Activated naive CD4-positive, alpha-beta T cell treated with anti-CD3 and anti-CD28 coated beads for 36 hours (primary cell): ENCODE measurements at regions of chr17 and their contacts with region 1.

Region 1: DNA sequence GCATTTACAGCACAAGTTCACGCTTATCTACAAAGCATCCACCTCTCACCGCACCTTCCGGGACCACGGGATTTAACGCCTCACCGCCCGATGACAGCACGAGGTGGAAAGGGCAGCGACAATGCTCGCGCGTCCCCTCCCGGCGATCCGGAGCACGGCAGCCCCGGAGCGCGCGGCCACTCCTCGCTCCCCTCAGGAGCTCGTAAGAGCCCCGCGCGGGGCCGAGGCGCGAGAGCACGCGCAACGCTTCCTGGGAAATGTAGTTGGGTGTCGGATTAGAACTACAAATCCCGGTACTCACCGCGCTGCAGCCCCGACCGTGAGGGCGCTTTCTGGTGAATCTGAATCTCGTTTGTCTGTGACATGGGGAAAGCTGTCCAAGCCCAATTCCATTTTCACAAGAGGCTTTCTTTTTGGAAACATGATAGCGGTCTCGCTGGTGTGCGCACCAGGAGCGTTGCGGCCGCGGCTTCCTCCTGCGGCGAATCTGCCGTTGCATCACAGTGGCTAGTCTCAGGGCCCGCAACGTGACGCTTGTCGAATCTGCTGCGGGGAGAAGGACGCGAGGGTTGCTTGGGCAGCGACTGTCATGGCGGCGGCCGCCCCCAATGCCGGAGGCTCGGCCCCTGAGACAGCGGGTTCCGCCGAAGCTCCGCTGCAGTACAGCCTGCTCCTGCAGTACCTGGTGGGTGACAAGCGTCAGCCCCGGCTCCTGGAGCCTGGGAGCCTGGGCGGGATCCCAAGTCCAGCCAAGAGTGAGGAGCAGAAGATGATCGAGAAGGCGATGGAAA is at the start of gene TIMM22:
- DNase-seq: peak; percentile 95
- H3K4me3 Mint-ChIP-seq: peak within 1 kb of the TSS; percentile 90
- H3K27ac Mint-ChIP-seq: peak within 1 kb of the TSS; percentile 96
- H3K4me1 Mint-ChIP-seq: peaks cover 26% of the 10 kb centered on the region
- H3K27me3 Mint-ChIP-seq: no peaks in the 10 kb centered on the region
- total RNA-seq, gene TIMM22: 7.3 to 7.4 TPM

Region 2: DNA sequence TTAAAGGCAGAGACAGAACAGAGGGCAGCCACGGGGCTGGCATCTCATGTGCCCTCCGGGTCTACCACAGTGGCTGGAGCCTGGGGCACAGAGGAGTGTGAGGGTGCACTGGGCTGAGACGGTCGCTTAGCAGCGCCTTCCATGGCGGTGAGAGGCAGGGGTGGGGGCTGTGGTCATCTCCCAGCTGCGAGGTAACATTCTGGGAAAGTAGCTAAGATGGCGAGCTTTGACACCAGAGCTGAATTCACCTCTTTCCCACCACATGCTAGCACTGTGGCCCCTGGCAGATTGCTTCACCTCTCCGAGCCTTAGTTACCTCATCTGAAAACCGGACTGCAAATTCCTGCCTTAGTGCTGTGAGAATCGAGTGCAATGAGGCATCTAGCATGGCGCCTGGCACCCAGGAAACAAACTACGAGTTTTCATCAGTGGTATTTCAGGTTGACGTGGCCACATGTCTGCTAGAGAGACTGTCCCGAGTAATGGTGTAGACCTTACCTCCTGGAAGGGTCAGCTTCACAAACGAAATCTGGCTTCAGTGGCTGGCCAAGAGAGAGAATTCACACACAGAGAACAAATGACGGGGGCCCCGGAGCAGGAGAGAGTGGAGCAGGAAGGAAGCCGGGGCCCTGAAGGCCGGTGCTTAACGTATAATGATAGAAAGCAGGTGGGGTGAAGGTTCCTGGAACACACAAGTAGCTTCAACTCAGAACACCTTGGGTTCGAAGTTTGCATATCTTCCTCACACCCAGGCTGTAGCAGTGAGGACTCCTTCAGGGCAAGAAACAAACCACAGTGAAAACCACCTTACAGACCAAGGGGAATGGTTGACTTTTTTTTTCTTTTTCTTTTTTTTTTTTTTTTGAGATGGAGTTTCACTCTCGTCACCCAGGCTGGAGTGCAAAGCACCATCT is 580.2 kb before region 1 on chr17:
- CTCF ChIA-PET with region 1: no interaction called
- intact Hi-C with region 1: loop called (anchors 1 kb)
- DNase-seq: peak; percentile 78
- H3K4me3 Mint-ChIP-seq: peak overlapping the region; percentile 91
- H3K27ac Mint-ChIP-seq: peak overlapping the region; percentile 100
- H3K4me1 Mint-ChIP-seq: peaks cover 77% of the 10 kb centered on the region
- H3K27me3 Mint-ChIP-seq: no peaks in the 10 kb centered on the region

Region 3: DNA sequence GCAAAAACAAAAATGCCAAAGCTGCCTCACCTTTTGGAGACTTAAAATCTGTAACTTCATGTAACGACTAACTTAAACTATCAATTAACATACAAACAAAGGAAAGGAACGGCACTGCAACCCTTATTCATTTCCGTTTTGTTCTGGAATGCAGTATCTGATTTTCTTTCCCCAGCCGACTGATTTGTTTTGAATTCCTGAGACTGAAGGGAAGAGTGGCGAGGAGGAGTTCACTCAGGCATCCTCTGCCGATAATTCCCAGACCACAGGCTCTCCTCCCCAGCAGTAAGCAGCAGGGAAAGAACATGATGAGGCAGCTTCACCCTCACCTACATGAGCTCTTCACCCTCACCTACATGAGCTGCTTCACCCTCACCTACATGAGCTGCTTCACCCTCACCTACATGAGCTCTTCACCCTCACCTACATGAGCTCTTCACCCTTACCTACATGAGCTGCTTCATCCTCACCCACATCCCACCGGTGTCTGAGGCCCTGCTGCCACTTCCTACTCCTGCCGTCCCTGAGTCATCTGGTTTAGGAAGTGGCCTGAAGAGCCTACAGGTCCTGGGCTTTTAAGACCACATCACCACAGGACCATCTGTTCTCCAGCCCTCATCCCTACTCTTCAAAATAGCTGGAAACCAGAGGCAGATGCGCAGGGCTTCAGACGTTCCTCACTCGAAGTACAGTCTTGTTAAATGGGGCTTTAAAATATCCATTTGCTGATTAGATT is 476.1 kb before region 1 on chr17:
- CTCF ChIA-PET with region 1: no interaction called
- intact Hi-C with region 1: no loop called
- DNase-seq: no peak
- H3K4me3 Mint-ChIP-seq: no peak overlapping the region
- H3K27ac Mint-ChIP-seq: no peak overlapping the region
- H3K4me1 Mint-ChIP-seq: no peaks in the 10 kb centered on the region
- H3K27me3 Mint-ChIP-seq: no peaks in the 10 kb centered on the region

Region 4: GRCh38 chr17:794876-795275 is 201.9 kb before region 1 on chr17:
- CTCF ChIA-PET with region 1: interaction called, 10 read pairs
- intact Hi-C with region 1: loop called (anchors 1 kb)
- DNase-seq: peak; percentile 64
- H3K4me3 Mint-ChIP-seq: no peak overlapping the region
- H3K27ac Mint-ChIP-seq: no peak overlapping the region
- H3K4me1 Mint-ChIP-seq: peaks cover 6% of the 10 kb centered on the region
- H3K27me3 Mint-ChIP-seq: no peaks in the 10 kb centered on the region

Region 5: DNA sequence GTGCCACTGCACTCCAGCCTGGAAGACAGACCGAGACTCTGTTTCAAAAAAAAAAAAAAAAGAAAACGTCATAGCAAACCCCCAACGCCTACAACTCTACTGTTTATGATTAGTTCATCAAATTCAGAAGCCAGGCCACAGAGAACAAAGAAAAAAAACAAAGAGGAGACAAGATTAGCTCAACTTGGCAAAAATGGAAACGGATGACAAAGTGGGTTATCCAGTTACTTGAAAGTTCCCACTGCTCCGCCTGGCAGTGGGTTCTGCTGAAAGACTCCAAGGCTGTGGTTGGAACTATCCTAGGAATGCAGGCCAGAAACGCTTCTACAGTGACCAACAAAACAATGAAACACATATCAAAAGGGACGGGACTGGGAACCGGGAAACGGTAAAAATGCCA is 161.5 kb before region 1 on chr17:
- CTCF ChIA-PET with region 1: no interaction called
- intact Hi-C with region 1: no loop called
- DNase-seq: no peak
- H3K4me3 Mint-ChIP-seq: no peak overlapping the region
- H3K27ac Mint-ChIP-seq: no peak overlapping the region
- H3K4me1 Mint-ChIP-seq: no peaks in the 10 kb centered on the region
- H3K27me3 Mint-ChIP-seq: no peaks in the 10 kb centered on the region

Region 6: GRCh38 chr17:979538-980405 is 17.0 kb before region 1 on chr17 and contains the start of gene NXN:
- CTCF ChIA-PET with region 1: interaction called, 13 read pairs
- intact Hi-C with region 1: loop called (anchors 2 kb)
- DNase-seq: peak; percentile 86
- H3K4me3 Mint-ChIP-seq: peak within 1 kb of the TSS; percentile 66
- H3K27ac Mint-ChIP-seq: no peak within 1 kb of the TSS
- H3K4me1 Mint-ChIP-seq: peaks cover 19% of the 10 kb centered on the region
- H3K27me3 Mint-ChIP-seq: peaks cover 33% of the 10 kb centered on the region
- total RNA-seq, gene NXN: 0.20 to 0.33 TPM

Region 7: GRCh38 chr17:1108861-1109605 is 112.3 kb after region 1 on chr17:
- CTCF ChIA-PET with region 1: no interaction called
- intact Hi-C with region 1: loop called (anchors 5 kb)
- DNase-seq: peak; percentile 71
- H3K4me3 Mint-ChIP-seq: peak overlapping the region; percentile 83
- H3K27ac Mint-ChIP-seq: peak overlapping the region; percentile 77
- H3K4me1 Mint-ChIP-seq: peaks cover 38% of the 10 kb centered on the region
- H3K27me3 Mint-ChIP-seq: no peaks in the 10 kb centered on the region